GM12878 (cell line): ENCODE measurements at regions of chr17 and their contacts with region 1.

Region 1: DNA sequence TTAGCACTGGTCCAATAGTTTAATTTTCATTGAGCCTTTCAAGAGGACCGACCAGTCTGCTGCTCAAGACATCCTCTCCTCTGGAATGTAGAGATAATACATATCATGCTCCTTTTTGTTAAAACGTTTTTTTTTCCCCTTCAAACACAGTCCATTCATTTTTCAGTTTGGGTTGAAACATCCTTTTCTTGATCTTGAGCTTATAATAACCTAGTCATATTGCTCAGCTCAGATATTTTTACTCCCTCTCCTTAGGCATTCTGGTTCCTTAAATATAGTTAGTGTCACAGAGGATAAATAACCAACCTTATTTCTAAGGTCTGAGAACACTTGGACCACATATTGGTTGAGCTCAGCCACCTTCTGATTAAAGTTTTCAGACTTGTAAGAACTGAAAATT is 12.8 kb downstream of the ANKRD40CL start:
- DNase-seq: no peak
- ATAC-seq: no peak
- H3K4me3 ChIP-seq: no peak overlapping the region
- H3K27ac ChIP-seq: no peak overlapping the region
- H3K4me1 ChIP-seq: no peaks in the 10 kb centered on the region
- H3K27me3 ChIP-seq: no peaks in the 10 kb centered on the region
- CTCF ChIP-seq: no peak
- EP300 ChIP-seq: no peak
- POLR2A ChIP-seq: no peak
- RAD21 ChIP-seq: no peak

Region 2: GRCh38 chr17:50765454-50766221 is 11.1 kb after region 1 on chr17:
- CTCF ChIA-PET with region 1: interaction called, 15 read pairs
- POLR2A ChIA-PET with region 1: no interaction called
- RAD21 ChIA-PET with region 1: no interaction called
- SMC1A ChIA-PET with region 1: interaction called, 3 read pairs
- in situ Hi-C with region 1: no loop called
- intact Hi-C with region 1: no loop called
- DNase-seq: peak; percentile 37
- ATAC-seq: peak; percentile 81
- H3K4me3 ChIP-seq: no peak overlapping the region
- H3K27ac ChIP-seq: 0 out of 2 replicates have a peak overlapping the region, but pooled peaks have one; percentile 17
- H3K4me1 ChIP-seq: peaks cover 16% of the 10 kb centered on the region
- H3K27me3 ChIP-seq: no peaks in the 10 kb centered on the region
- CTCF ChIP-seq: no peak
- EP300 ChIP-seq: no peak
- POLR2A ChIP-seq: no peak
- RAD21 ChIP-seq: no peak